GM10248 (cell line): ENCODE measurements at regions of chr1 and their contacts with region 1.

Region 1: GRCh38 chr1:75265792-75266191 is 131.6 kb downstream of the LHX8 start:
- DNase-seq: peak; percentile 15
- CTCF ChIP-seq: peak; percentile 50

Region 2: DNA sequence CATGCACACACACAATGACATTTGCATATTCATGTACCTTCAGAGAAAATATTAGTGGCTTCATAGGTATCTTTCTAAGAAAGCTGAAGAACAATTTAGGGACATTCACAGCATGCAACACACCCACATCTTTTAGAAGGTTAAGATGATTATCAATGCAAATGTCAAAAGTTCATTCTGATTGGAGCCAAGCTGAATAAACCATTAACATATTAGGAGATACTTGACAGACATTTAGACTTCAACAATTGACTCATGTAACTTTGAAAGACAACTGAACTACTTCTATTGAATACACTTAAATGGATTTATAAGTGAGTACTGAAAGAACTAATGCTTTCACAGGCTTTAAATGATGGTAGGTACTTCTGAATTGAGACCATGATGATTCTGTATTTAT is 20.6 kb before region 1 on chr1:
- CTCF ChIA-PET with region 1: interaction called, 17 read pairs
- POLR2A ChIA-PET with region 1: no interaction called
- DNase-seq: no peak
- CTCF ChIP-seq: no peak

Region 3: DNA sequence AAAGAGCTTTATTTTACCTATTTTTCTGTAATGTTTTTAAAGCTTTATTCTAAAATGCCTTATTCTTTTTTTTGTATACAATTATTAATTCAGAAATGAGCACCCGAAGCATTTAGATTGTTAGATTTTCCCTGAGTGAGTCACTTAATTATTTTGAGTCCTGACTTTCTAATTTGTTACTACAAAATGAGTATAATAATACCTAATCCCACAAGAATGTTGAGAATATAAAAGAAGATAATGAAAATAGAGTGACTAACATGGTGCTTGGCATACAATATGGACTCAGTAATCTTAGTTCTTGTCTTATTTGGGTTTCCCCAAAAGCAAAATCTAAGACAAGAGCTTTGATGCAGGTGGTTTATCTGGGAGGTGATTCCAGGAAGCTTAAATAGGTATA is 10.6 kb after region 1 on chr1:
- CTCF ChIA-PET with region 1: interaction called, 42 read pairs
- POLR2A ChIA-PET with region 1: no interaction called
- DNase-seq: no peak
- CTCF ChIP-seq: no peak

Region 4: DNA sequence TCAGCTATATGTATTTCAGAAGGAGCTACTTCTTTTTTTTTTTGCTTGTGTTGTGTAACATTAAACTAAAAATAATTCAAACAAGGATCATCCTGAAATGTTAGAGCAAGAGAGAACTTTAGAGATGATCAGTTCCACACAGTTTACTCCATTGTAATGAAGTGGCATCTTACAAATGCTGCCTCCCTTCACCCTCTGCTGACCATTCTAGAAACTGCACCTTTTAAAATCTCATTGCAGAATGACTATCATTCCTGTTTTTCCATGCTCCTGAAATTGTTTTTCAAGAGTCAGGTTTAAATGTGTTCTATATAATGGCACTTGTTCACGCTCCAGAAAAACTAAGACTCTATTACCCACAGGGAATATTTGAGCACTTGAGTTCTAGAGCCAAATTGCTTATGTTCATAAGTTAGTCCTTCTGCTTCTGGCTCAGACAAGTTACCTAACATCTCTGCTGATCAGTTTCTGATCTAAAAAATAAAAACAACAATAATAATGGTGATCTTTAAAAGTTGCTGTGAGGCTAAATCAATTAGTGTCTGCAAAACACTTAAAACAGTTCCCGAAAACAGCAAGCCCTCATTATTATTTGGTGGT is 366.7 kb after region 1 on chr1:
- CTCF ChIA-PET with region 1: interaction called, 31 read pairs
- POLR2A ChIA-PET with region 1: no interaction called
- DNase-seq: peak; percentile 15
- CTCF ChIP-seq: peak; percentile 73